PC-9 (cell line): ENCODE measurements at regions of chr5 and their contacts with region 1.

Region 1: GRCh38 chr5:110361461-110361860 is 365.0 kb downstream of the TMEM232 start:
- DNase-seq: no peak
- H3K4me3 ChIP-seq: no peak overlapping the region
- H3K27ac ChIP-seq: no peak overlapping the region
- H3K4me1 ChIP-seq: no peaks in the 10 kb centered on the region
- H3K27me3 ChIP-seq: no peaks in the 10 kb centered on the region
- CTCF ChIP-seq: no peak

Region 2: DNA sequence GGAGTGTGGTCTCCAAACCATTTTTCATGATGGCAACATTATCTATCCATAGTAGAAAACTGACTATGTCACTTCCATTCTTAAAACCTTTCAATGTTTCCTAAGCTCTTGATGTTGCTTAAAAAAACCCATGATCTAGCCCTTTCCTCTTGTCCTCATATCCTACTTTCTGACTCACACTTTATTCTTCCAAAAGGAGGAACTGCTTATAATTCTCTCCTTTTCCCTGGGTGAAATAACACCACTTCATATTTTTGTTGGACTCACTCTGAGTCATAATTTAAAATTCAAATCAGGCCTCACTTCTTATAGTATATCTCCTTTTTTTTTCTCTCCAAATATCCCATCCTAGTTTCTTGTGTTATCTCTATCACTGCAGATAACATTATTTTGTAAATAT is 157.8 kb before region 1 on chr5:
- CTCF ChIA-PET with region 1: no interaction called
- POLR2A ChIA-PET with region 1: no interaction called
- intact Hi-C with region 1: no loop called
- DNase-seq: no peak
- H3K4me3 ChIP-seq: no peak overlapping the region
- H3K27ac ChIP-seq: no peak overlapping the region
- H3K4me1 ChIP-seq: no peaks in the 10 kb centered on the region
- H3K27me3 ChIP-seq: no peaks in the 10 kb centered on the region
- CTCF ChIP-seq: no peak

Region 3: DNA sequence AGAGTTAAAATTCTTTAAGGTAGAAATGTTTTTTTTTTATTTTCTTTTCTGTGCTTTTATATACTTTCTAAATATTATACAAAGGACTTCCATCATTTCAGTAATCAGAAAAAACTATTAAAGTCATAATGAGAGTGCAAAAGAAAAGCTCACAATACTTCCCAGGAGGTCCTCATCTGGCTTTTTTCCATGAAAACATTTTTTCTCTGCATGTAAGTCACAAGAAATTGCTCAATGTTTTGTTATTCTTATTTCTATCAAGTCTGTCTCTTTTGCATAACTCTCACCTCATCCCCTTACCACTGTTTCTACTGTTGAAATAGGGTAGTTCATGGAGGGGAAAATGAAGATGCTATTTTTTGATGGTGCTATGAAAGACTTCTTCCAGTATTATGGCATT is 10.0 kb before region 1 on chr5:
- CTCF ChIA-PET with region 1: no interaction called
- POLR2A ChIA-PET with region 1: no interaction called
- intact Hi-C with region 1: no loop called
- DNase-seq: no peak
- H3K4me3 ChIP-seq: no peak overlapping the region
- H3K27ac ChIP-seq: no peak overlapping the region
- H3K4me1 ChIP-seq: no peaks in the 10 kb centered on the region
- H3K27me3 ChIP-seq: no peaks in the 10 kb centered on the region
- CTCF ChIP-seq: no peak

Region 4: GRCh38 chr5:110807169-110807568 is 445.7 kb after region 1 on chr5:
- CTCF ChIA-PET with region 1: no interaction called
- POLR2A ChIA-PET with region 1: interaction called, 14 read pairs
- intact Hi-C with region 1: no loop called
- DNase-seq: no peak
- H3K4me3 ChIP-seq: no peak overlapping the region
- H3K27ac ChIP-seq: no peak overlapping the region
- H3K4me1 ChIP-seq: no peaks in the 10 kb centered on the region
- H3K27me3 ChIP-seq: no peaks in the 10 kb centered on the region
- CTCF ChIP-seq: no peak